Activated T-helper 1 cell treated with anti-CD3 and anti-CD28 coated beads, Interleukin-12 subunit alpha, Interleukin-12 subunit beta, Interleukin-2, Interleukin-4 antibody, amounts not matched to agents 30 ng/mL and 10 ng/mL and 1 ng/mL, durations not matched to agents 14 hours and 24 hours and 36 hours (primary cell): ENCODE measurements at regions of chr10 and their contacts with region 1.

Region 1: DNA sequence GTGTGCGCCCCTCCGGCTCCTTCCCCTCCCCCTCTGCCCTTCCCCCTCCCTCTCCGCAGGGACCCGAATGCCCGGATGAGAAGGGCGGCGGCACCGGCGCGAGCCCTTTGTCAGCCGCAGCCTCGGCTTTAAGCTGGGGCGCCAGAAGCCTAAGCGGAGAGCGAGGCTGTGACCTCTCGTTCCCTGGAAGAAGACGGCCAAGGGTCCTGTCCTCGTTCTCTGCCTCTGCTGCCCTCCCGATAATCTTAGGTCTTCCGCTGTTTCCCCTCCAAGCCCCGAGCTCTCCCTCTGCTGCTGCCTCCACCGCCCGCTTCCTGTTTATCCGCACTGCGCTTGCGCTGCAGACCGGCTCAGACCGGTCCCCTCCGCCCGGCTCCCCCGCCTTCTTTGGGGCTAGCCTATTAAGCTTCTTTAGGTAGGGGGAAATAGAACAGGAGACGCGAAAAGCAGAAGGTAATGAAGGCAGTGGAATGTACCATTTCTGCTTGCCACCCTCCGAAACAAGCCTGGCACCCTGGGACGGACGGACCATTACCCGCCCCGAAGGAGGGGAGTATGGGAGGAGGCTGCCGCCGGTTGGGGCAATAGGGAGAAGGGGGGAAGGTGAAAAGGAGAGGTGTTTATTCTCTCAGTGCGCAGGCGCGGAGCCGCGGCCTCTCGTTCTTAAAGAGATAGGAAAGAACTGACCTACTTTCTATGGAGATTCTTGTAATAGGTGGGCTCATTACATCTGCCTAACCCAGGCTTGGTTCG is at the start of gene OGA:
- DNase-seq: peak; percentile 97
- H3K4me3 Mint-ChIP-seq: peak within 1 kb of the TSS; percentile 100
- H3K27ac Mint-ChIP-seq: peak within 1 kb of the TSS; percentile 100
- H3K4me1 Mint-ChIP-seq: peaks cover 57% of the 10 kb centered on the region
- H3K27me3 Mint-ChIP-seq: peaks cover 3% of the 10 kb centered on the region
- total RNA-seq, gene OGA: 113 and 117 TPM in 2 replicates

Region 2: DNA sequence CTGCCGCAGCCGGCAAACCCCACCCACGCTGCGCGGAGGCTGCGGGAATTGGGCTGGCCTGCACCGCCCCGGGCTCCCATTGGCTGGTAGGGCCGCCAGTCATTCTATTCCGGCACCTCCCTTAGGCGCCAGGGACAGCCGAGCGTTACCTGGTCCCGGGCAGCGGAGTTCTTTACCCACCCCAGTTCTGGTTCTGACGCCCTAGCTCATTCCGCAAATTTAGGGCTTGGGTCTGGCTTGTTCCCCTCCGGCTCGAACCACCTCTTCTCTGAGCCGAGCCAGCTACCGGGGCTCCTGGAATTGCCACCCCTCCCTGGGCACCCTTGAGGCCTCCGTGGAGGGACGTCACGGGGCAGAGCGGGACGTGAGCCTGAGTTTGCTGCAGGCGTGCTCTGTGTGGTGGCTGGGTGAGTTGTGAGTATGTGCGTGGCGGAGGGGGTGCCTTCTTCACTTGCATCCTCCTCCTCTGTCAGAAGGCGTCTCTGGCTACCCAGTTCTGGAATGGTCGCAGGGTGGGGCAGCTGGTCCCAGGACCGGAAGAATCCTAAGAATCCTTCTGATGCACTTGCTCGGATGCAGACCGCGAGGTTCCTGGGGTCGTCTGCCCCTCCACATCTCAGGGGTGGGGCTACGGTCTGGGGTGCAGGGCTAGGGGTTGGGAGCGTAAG is 787.0 kb before region 1 on chr10 and contains the starts of genes PDZD7 and SFXN3:
- intact Hi-C with region 1: loop called (anchors 1 kb)
- DNase-seq: peak; percentile 94
- H3K4me3 Mint-ChIP-seq: peak within 1 kb of the TSS; percentile 84
- H3K27ac Mint-ChIP-seq: peak within 1 kb of the TSS; percentile 94
- H3K4me1 Mint-ChIP-seq: peaks cover 27% of the 10 kb centered on the region
- H3K27me3 Mint-ChIP-seq: peaks cover 21% of the 10 kb centered on the region
- total RNA-seq, gene PDZD7: 0.47 and 0.54 TPM in 2 replicates
- total RNA-seq, gene SFXN3: 34.8 and 39.0 TPM in 2 replicates

Region 3: DNA sequence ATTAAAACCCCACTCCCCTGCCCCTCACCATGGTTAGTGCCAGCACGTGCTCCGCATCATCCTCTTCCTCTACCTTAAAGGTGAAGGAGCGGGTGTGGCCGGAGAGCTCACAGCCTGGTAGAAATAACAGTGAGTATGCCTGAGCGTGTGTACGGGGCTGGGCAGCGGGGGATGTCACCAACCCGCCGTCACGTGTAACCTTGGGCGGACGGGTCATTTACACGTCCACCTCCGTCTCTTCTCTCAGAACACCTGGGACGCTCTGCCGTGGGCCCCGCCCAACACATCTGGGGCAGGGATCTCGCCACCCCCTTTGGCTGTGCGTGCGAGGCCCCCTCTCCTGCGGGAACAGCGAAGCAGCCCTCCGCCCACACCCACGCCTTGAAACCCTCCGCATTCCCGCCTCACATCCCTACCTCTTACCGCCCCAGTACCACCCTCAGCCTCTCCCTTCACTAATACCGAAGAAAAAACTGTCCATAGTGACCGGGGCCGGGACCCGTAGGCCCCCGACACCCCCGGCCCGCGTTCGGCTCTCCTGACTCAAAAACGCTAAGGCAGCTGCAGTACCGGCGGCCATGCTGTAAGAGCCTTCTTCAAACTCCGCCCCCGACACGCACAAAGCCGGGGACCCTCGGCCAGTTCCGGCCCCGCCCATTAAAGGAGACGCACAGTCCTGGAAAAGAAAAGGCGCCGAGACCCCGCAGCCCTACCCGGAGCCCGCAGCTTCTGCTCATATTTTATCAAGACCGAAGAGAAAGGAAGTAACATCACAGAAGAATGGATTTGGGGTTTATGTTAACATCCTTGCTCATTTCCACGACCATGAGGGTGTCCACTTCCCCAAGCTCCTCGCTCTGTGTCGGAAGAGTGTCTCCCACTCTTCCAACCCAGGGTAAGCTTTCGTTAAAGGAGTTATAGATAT is 35.2 kb before region 1 on chr10 and contains the start of gene NPM3:
- intact Hi-C with region 1: loop called (anchors 1 kb)
- DNase-seq: peak; percentile 78
- H3K4me3 Mint-ChIP-seq: peak within 1 kb of the TSS; percentile 100
- H3K27ac Mint-ChIP-seq: peak within 1 kb of the TSS; percentile 99
- H3K4me1 Mint-ChIP-seq: peaks cover 59% of the 10 kb centered on the region
- H3K27me3 Mint-ChIP-seq: peaks cover 5% of the 10 kb centered on the region
- total RNA-seq, gene NPM3: 149 and 151 TPM in 2 replicates

Region 4: DNA sequence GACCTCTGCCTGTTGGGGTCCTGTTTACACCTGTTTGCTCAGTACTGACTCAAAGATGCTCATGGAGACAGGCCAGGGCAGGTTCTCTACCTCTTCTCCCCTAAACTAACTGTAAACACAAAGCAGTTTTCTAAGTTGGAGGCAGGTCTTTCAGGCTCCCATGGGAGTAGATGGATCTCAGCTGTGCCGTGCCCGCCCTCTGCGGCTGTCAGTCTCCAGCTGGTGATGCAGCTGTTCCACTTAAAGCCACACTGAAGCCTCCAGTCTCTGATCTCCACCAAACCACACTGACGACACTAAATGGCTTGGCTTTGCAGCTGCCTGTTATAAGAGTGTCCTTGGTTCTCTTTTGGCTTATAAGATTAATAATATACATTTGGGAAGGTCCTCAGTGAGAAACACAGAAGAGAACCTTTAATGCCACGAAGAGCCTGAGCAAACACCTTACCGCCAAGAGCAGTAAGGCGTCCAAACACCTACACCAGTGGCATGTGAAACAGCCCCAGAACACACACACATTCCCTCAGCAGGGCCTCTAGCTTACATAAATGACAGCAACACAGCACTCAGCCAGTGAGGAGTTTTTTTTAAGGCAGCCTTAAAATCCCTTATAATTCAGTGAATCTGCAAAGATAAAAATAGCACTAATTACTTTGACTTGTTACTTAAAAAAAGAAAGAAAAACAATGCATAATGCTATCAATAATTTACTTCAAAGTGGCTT is 85.7 kb after region 1 on chr10:
- intact Hi-C with region 1: no loop called
- DNase-seq: no peak
- H3K4me3 Mint-ChIP-seq: no peak overlapping the region
- H3K27ac Mint-ChIP-seq: no peak overlapping the region
- H3K4me1 Mint-ChIP-seq: peaks cover 26% of the 10 kb centered on the region
- H3K27me3 Mint-ChIP-seq: no peaks in the 10 kb centered on the region

Region 5: DNA sequence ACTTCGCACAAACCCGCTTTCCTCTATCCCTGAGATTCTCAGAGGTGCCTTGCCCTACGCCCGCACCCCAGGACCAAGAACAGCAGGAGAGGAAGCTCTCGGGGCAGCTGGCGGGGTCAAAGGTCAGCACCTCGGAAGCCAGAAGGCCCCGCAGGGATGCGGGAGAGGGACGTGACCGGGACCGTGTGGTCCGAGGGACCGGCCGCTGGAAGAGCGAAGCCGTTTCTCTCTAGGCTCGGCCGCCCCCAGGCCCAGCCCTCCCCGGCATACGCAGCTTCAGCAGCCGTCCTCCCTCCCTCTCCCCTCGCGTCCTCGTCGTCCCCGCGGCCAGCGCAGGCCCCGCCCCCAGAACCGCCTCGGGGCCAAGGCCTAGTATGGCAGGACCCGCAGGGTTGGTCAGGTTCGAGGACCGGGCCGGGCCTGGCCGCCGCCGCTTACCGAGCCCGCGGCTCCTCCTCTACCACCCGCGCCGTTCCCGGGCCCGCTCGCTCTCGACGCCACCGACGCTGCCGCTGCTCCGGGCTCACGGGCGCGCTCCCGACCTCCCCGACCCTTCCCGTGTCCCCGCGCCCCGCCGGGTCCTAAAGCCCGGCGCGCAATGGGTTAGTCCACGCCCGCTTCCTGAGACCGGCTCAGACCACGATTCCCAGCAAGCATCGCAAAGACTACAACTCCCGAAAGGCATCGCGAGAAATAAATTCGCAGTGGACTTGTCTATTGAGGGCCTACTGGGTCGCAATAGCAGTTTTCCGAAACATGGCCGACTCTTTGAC is 237.5 kb after region 1 on chr10 and contains the start of gene ARMH3:
- intact Hi-C with region 1: loop called (anchors 1 kb)
- DNase-seq: peak; percentile 90
- H3K4me3 Mint-ChIP-seq: peak within 1 kb of the TSS; percentile 89
- H3K27ac Mint-ChIP-seq: peak within 1 kb of the TSS; percentile 94
- H3K4me1 Mint-ChIP-seq: peaks cover 31% of the 10 kb centered on the region
- H3K27me3 Mint-ChIP-seq: no peaks in the 10 kb centered on the region
- total RNA-seq, gene ARMH3: 21.5 and 24.8 TPM in 2 replicates

Region 6: GRCh38 chr10:102132563-102133372 is 314.5 kb after region 1 on chr10 and contains the start of gene PPRC1:
- intact Hi-C with region 1: loop called (anchors 1 kb)
- DNase-seq: peak; percentile 97
- H3K4me3 Mint-ChIP-seq: peak within 1 kb of the TSS; percentile 95
- H3K27ac Mint-ChIP-seq: peak within 1 kb of the TSS; percentile 94
- H3K4me1 Mint-ChIP-seq: peaks cover 29% of the 10 kb centered on the region
- H3K27me3 Mint-ChIP-seq: no peaks in the 10 kb centered on the region
- total RNA-seq, gene PPRC1: 112 and 115 TPM in 2 replicates